ENCODE measurements at regions of chr7 and their contacts with region 1.

Region 1: GRCh38 chr7:155344600-155345433 is 47.1 kb downstream of the INSIG1 start:
- DNase-seq: peak; percentile 75
- ATAC-seq: peak; percentile 80
- H3K4me3 Mint-ChIP-seq: peak overlapping the region; percentile 41
- H3K27ac Mint-ChIP-seq: no peak overlapping the region
- H3K4me1 Mint-ChIP-seq: peaks cover 6% of the 10 kb centered on the region
- H3K27me3 Mint-ChIP-seq: peaks cover 18% of the 10 kb centered on the region
- CTCF ChIP-seq: peak; percentile 82

Region 2: GRCh38 chr7:155190688-155191087 is 154.1 kb before region 1 on chr7:
- CTCF ChIA-PET with region 1: interaction called, 19 read pairs
- POLR2A ChIA-PET with region 1: no interaction called
- intact Hi-C with region 1: loop called (anchors 5 kb)
- DNase-seq: peak; percentile 75
- ATAC-seq: peak; percentile 90
- H3K4me3 Mint-ChIP-seq: no peak overlapping the region
- H3K27ac Mint-ChIP-seq: no peak overlapping the region
- H3K4me1 Mint-ChIP-seq: peaks cover 20% of the 10 kb centered on the region
- H3K27me3 Mint-ChIP-seq: peaks cover 13% of the 10 kb centered on the region
- CTCF ChIP-seq: peak; percentile 95

Region 3: DNA sequence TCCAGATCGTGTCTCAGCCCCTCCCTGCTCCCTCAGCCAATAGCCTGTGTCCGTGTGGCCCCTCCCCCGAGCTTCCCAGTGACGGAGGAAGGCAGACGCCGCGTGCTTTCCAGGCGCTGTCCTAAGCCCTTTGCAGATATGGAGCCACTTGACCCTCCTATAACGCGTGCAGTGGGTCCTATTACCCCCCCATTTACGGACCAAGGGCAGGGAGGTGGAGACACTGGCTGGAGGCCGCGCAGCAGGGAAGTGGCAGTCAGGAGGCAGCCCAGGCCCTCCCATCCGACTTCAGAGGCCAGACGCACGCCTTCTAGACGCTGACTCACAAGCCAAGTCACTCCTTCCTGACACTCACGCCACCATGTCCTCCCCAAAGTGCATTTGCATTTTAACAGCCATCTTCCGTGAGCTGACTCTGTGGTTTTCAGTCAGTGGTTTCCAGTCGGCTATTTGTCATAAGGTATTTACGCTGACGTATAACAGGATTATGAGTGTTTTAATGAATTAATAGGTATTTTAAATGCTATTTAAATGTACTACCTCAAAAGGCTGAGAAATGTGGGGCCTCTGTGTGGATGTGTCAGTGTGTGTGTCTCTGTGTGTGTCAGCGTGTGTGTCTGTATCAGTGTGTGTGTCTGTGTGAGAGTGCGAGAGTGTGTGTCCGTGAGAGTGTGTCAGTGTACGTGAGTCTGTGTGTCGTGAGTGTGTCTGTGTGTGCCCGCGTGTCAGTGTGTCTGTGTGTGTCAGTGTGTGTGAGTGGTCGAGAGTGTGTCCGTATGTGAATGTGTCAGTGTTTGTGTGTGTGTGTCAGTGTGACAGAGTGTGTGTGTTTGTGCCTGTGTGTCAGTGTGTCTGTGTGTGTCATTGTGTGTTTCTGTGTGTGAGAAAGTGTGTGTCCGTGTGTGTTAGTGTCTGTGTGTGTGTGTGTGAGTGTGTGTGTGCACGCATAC is 139.2 kb before region 1 on chr7:
- CTCF ChIA-PET with region 1: interaction called, 21 read pairs
- POLR2A ChIA-PET with region 1: interaction called, 11 read pairs
- intact Hi-C with region 1: no loop called
- DNase-seq: peak; percentile 96
- ATAC-seq: peak; percentile 89
- H3K4me3 Mint-ChIP-seq: peak overlapping the region; percentile 82
- H3K27ac Mint-ChIP-seq: peak overlapping the region; percentile 100
- H3K4me1 Mint-ChIP-seq: peaks cover 37% of the 10 kb centered on the region
- H3K27me3 Mint-ChIP-seq: no peaks in the 10 kb centered on the region
- CTCF ChIP-seq: no peak

Region 4: GRCh38 chr7:155287304-155287935 is 57.4 kb before region 1 on chr7:
- CTCF ChIA-PET with region 1: interaction called, 11 read pairs
- POLR2A ChIA-PET with region 1: interaction called, 3 read pairs
- intact Hi-C with region 1: no loop called
- DNase-seq: no peak
- ATAC-seq: no peak
- H3K4me3 Mint-ChIP-seq: no peak overlapping the region
- H3K27ac Mint-ChIP-seq: peak overlapping the region; percentile 17
- H3K4me1 Mint-ChIP-seq: peaks cover 39% of the 10 kb centered on the region
- H3K27me3 Mint-ChIP-seq: peaks cover 3% of the 10 kb centered on the region
- CTCF ChIP-seq: no peak

Region 5: DNA sequence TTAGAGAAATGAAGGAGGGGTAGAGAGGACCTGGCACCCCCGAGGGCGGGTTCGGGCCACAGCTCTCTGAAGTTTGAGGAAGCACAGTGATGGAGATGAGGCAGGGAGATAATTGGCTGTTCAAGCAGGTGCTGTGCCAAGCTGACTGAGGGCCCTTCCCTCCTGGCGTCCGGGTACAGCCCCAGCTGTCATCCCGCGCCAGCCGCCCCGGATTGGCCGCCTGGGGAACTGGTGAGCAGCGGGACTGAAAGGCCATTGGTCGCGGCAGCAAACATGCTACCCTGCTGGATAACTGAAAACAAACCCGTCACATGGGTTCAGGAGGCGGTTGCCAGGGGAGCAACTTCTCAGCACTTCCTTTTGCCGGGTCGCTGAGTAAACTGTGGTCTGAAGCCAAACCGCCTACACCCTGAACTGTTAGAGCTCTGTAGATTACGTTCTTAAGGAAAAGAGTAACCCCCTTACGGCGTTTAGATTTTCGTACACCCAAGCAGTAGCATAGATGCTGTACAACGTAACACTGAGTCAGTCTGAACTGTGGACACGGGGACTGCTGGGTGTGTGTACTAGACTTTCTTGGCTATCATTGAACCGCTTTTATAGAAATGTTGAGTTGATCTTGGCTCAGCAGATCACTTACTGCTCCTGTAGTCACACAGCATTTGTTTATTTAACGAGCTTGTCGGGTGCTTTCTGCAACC is 45.8 kb before region 1 on chr7:
- CTCF ChIA-PET with region 1: interaction called, 49 read pairs
- POLR2A ChIA-PET with region 1: interaction called, 23 read pairs
- intact Hi-C with region 1: loop called (anchors 2 kb)
- DNase-seq: peak; percentile 98
- ATAC-seq: peak; percentile 80
- H3K4me3 Mint-ChIP-seq: peak overlapping the region; percentile 96
- H3K27ac Mint-ChIP-seq: peak overlapping the region; percentile 93
- H3K4me1 Mint-ChIP-seq: peaks cover 43% of the 10 kb centered on the region
- H3K27me3 Mint-ChIP-seq: no peaks in the 10 kb centered on the region
- CTCF ChIP-seq: no peak

Region 6: DNA sequence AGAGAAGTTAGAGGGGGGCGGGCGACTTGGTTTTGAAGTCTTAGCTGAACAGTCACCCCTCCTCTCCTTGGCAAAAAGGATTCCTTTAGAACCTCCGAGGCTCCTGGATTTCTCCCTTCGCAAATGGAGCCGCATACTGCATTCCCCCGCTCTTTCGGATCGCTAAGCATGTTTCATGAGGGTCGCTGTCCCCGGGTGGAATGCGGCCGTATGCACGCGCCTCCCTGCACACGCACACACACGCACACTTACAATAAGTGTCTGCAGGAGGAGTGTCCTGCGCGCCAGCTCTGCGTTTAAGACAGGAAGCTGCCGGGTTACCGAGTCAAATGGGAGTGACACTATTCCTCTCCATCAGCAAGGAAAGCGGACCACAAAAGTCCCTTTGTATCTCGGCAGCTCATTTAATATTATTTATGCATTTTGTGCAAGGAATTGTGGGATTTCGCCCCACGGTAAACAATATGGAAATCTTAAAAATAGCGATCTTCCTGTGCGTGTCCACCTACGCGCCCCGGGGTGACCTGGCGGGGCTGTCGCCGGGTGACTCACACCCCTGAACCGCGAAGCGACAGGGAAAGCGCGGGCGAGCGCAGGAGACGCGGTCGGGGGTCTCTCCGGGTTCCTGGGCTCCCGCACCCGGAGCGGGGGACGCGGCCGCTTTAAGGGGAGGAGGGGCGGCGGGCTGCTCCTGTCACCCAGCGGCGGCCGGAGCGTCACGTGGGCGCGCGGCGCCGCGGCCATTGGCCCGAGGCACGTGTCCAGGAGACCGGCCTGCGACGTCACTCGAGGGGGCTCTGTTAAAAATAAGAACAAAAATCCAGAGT is 112.1 kb after region 1 on chr7:
- CTCF ChIA-PET with region 1: no interaction called
- POLR2A ChIA-PET with region 1: no interaction called
- intact Hi-C with region 1: no loop called
- DNase-seq: peak; percentile 63
- ATAC-seq: peak; percentile 34
- H3K4me3 Mint-ChIP-seq: peak overlapping the region; percentile 44
- H3K27ac Mint-ChIP-seq: no peak overlapping the region
- H3K4me1 Mint-ChIP-seq: peaks cover 5% of the 10 kb centered on the region
- H3K27me3 Mint-ChIP-seq: peaks cover 74% of the 10 kb centered on the region
- CTCF ChIP-seq: no peak